ENCODE measurements at regions of chr4 and their contacts with region 1.

Region 1: GRCh38 chr4:89894649-89895550 is at the start of gene MMRN1:
- DNase-seq: peak; percentile 22
- ATAC-seq: peak; percentile 53
- H3K4me3 Mint-ChIP-seq: peak within 1 kb of the TSS; percentile 58
- H3K27ac Mint-ChIP-seq: peak within 1 kb of the TSS; percentile 86
- H3K4me1 Mint-ChIP-seq: peaks cover 21% of the 10 kb centered on the region
- H3K27me3 Mint-ChIP-seq: no peaks in the 10 kb centered on the region
- total RNA-seq, gene MMRN1: 0.04 to 0.11 TPM

Region 2: DNA sequence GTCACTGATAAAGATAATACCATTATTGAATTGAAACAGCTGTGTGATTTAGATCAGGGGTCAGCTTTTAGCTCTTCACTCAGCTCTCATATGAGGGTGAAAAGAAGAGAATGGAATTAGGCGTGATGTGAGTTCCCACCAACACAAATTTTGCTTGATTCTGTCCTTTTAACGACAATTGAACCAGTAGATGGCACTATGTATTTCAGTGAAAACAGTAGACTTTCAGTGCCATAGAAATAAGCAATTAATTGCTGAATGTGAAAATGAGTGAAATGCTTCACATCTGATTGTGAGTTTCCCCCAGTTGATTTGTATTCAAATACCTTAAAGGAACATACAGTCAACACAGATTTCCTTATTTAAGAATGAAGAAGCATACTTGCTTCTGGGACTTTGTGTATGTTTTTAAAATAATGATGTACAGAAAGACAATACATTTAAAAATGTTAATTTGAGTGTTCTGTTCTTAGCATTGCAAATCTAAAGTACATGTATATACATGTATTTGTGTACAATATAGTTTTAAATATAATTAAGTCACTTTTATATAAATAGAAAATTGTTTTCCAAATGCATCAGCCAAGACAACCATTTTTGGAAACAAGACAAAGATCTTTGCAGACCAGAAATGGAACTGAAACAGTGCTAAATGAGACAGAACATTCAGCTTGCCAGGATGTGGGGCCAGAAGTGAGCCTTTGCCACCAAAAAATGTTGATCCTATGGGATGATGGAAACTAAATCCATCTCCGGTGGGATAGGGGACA is 236.8 kb before region 1 on chr4:
- CTCF ChIA-PET with region 1: no interaction called
- POLR2A ChIA-PET with region 1: no interaction called
- intact Hi-C with region 1: loop called in 1 of 2 experiments (anchors 2 kb)
- DNase-seq: no peak
- ATAC-seq: no peak
- H3K4me3 Mint-ChIP-seq: no peak overlapping the region
- H3K27ac Mint-ChIP-seq: no peak overlapping the region
- H3K4me1 Mint-ChIP-seq: peaks cover 2% of the 10 kb centered on the region
- H3K27me3 Mint-ChIP-seq: no peaks in the 10 kb centered on the region

Region 3: GRCh38 chr4:89836897-89837384 is 58.0 kb before region 1 on chr4 and contains the start of gene SNCA:
- CTCF ChIA-PET with region 1: no interaction called
- POLR2A ChIA-PET with region 1: no interaction called
- intact Hi-C with region 1: loop called in 1 of 2 experiments (anchors 2 kb)
- DNase-seq: peak; percentile 76
- ATAC-seq: peak; percentile 70
- H3K4me3 Mint-ChIP-seq: peak within 1 kb of the TSS; percentile 70
- H3K27ac Mint-ChIP-seq: no peak within 1 kb of the TSS
- H3K4me1 Mint-ChIP-seq: peaks cover 16% of the 10 kb centered on the region
- H3K27me3 Mint-ChIP-seq: peaks cover 48% of the 10 kb centered on the region
- total RNA-seq, gene SNCA: 0.85 to 1.3 TPM

Measured in activated CD4-positive, alpha-beta T cell treated with anti-CD3 and anti-CD28 coated beads for 36 hours (primary cell).